CD8-positive, alpha-beta memory T cell (primary cell): ENCODE measurements at regions of chr14 and their contacts with region 1.

Region 1: DNA sequence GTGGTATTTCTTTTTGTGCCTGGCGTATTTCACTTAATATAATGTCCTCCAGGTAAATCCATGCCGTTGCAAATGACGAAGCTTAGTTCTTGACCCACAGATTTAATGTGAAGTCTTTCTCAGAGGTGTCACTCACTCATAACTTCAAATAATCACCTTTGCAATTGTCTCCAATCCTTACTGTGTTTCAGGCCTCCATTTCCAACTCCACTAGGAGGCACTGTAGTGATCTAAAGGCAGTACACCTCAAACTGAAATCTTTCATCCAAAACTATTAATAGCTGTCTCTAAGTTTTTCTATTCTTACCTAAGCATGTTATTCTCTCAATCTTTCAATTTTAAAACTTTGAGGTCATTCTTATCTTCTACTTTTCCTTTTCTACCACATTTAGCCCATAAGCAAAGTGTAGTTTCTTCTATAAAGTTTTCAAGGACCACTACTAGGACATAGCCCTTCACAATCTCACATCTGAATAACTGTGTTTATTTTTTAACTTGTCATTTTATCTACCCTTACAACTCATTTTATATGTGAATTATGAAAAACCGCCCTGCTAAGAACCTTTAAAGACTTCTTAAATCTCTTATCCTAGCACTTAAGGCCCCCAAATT is 25.5 kb upstream of the FBXO34 start:
- DNase-seq: peak in 2 of 5 donors; percentile 10 to 25
- H3K4me3 ChIP-seq: no peak overlapping the region
- H3K4me3 Mint-ChIP-seq: no peak overlapping the region
- H3K27ac ChIP-seq: no peak overlapping the region
- H3K27ac Mint-ChIP-seq: no peak overlapping the region
- H3K4me1 ChIP-seq: no peaks in the 10 kb centered on the region
- H3K4me1 Mint-ChIP-seq: no peaks in the 10 kb centered on the region
- H3K27me3 ChIP-seq: no peaks in the 10 kb centered on the region
- H3K27me3 Mint-ChIP-seq: peaks cover 17 to 35% of the 10 kb centered on the region in 2 donors

Region 2: DNA sequence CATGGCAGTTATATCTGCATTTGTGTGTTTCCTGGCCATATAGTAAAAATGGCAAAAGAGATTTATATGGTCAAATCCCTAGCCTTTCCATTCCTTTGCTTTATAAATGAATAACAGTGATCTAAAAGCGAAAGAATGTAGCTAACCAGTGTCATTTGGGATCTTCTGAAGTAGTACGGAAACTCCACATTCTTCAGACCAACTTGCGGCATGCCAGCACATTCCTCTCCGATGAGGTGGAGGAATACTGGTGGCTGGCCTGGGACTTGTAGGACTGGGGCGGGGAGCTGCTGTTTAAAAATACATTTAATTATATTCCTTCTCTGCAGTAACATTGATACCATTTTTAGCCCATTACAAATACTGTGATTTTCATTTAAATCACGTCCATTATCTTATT is 593.6 kb before region 1 on chr14:
- CTCF ChIA-PET with region 1: no interaction called
- POLR2A ChIA-PET with region 1: no interaction called
- DNase-seq: no peak
- H3K4me3 ChIP-seq: no peak overlapping the region
- H3K4me3 Mint-ChIP-seq: no peak overlapping the region
- H3K27ac ChIP-seq: no peak overlapping the region
- H3K27ac Mint-ChIP-seq: no peak overlapping the region
- H3K4me1 ChIP-seq: no peaks in the 10 kb centered on the region
- H3K4me1 Mint-ChIP-seq: no peaks in the 10 kb centered on the region
- H3K27me3 ChIP-seq: peaks cover 3% of the 10 kb centered on the region
- H3K27me3 Mint-ChIP-seq: peaks cover 15 to 47% of the 10 kb centered on the region in 2 donors

Region 3: GRCh38 chr14:55129428-55130195 is 116.2 kb before region 1 on chr14:
- CTCF ChIA-PET with region 1: no interaction called
- POLR2A ChIA-PET with region 1: no interaction called
- DNase-seq: peak; percentile 18 to 77 (median 50)
- H3K4me3 ChIP-seq: peak overlapping the region; percentile 51
- H3K4me3 Mint-ChIP-seq: peak overlapping the region; percentile 80 to 91 (median 85)
- H3K27ac ChIP-seq: no peak overlapping the region
- H3K27ac Mint-ChIP-seq: peak overlapping the region; percentile 53 to 90 (median 76)
- H3K4me1 ChIP-seq: peaks cover 18% of the 10 kb centered on the region
- H3K4me1 Mint-ChIP-seq: peaks cover 38 to 51% (median 41%) of the 10 kb centered on the region in 3 donors
- H3K27me3 ChIP-seq: no peaks in the 10 kb centered on the region
- H3K27me3 Mint-ChIP-seq: no peaks in the 10 kb centered on the region

Region 4: DNA sequence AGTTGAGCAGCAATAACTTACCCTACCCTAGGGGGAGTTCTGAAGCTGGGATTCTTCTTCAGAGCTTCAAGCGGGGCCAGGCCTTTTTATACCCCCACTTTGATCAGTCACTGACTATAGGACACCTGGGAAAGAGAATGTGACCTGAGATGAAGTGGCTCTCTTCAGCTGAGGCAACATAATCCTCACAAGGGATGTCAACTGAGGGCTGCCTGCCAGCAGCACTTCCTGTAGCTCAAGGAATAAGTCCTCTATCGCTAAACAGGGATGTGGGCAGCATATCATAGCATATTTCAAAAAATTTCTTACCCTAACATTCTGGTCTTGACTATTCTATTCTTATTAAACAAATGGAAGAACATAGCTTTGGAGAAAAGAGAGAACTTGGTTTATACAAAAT is 99.3 kb before region 1 on chr14:
- CTCF ChIA-PET with region 1: no interaction called
- POLR2A ChIA-PET with region 1: no interaction called
- DNase-seq: no peak
- H3K4me3 ChIP-seq: no peak overlapping the region
- H3K4me3 Mint-ChIP-seq: no peak overlapping the region
- H3K27ac ChIP-seq: no peak overlapping the region
- H3K27ac Mint-ChIP-seq: peak overlapping the region in 1 of 8 donors; percentile 64
- H3K4me1 ChIP-seq: no peaks in the 10 kb centered on the region
- H3K4me1 Mint-ChIP-seq: peaks cover 0 to 10% (median 9%) of the 10 kb centered on the region in 3 donors
- H3K27me3 ChIP-seq: no peaks in the 10 kb centered on the region
- H3K27me3 Mint-ChIP-seq: no peaks in the 10 kb centered on the region

Region 5: DNA sequence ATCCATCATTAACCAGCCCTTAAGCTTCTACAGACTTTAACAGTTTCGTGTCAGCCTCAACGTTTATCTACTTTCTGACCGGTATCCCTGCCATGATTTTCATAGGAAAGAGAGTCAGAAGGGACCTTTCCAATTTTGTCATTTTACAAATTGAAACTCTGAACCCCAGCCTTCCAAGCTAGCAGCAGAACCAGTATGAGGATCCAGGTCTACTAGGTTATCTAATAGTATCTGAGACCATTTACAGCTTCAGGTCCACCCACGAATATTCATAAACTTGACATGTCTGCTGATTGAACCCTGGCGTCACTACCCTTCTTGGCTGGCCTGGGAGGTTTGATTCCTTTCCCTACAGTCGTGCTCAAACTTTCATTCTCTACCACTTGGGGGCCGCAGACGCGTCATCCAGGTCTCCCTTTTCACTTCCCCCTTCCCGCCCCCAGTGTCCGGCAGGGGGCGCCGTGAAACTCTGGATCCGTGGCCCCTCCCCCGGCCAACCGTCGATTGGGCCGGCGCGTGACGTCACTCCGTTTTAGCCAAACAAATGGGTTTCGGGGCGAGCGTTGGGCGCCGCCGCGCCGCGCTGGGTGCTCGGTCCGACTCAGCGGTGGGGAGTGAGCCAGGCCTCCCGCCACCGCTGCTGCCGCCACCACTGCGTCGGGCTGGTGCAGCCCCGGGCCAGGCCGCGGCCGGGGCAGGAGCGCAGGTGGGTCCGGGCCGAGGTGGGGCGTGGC is 25.2 kb after region 1 on chr14 and contains the start of gene FBXO34:
- CTCF ChIA-PET with region 1: interaction called, 15 read pairs
- POLR2A ChIA-PET with region 1: no interaction called
- DNase-seq: peak; percentile 98 to 100 (median 99)
- H3K4me3 ChIP-seq: peak within 1 kb of the TSS; percentile 94
- H3K4me3 Mint-ChIP-seq: peak within 1 kb of the TSS; percentile 89 to 96 (median 91)
- H3K27ac ChIP-seq: peak within 1 kb of the TSS; percentile 86
- H3K27ac Mint-ChIP-seq: peak within 1 kb of the TSS; percentile 92 to 98 (median 94)
- H3K4me1 ChIP-seq: peaks cover 21% of the 10 kb centered on the region
- H3K4me1 Mint-ChIP-seq: peaks cover 34 to 51% (median 47%) of the 10 kb centered on the region in 3 donors
- H3K27me3 ChIP-seq: no peaks in the 10 kb centered on the region
- H3K27me3 Mint-ChIP-seq: peaks cover 0 to 9% of the 10 kb centered on the region in 2 donors
- total RNA-seq, gene FBXO34: 16.2 to 17.9 TPM

Region 6: GRCh38 chr14:55430024-55430690 is 184.4 kb after region 1 on chr14:
- CTCF ChIA-PET with region 1: interaction called, 10 read pairs
- POLR2A ChIA-PET with region 1: no interaction called
- DNase-seq: peak in 4 of 5 donors; percentile 12 to 66 (median 56)
- H3K4me3 ChIP-seq: no peak overlapping the region
- H3K4me3 Mint-ChIP-seq: no peak overlapping the region
- H3K27ac ChIP-seq: no peak overlapping the region
- H3K27ac Mint-ChIP-seq: peak overlapping the region in 3 of 8 donors; percentile 0 to 73 (median 40)
- H3K4me1 ChIP-seq: peaks cover 29% of the 10 kb centered on the region
- H3K4me1 Mint-ChIP-seq: peaks cover 20 to 31% (median 31%) of the 10 kb centered on the region in 3 donors
- H3K27me3 ChIP-seq: no peaks in the 10 kb centered on the region
- H3K27me3 Mint-ChIP-seq: no peaks in the 10 kb centered on the region